ENCODE measurements at regions of chr3 and their contacts with region 1.

Region 1: DNA sequence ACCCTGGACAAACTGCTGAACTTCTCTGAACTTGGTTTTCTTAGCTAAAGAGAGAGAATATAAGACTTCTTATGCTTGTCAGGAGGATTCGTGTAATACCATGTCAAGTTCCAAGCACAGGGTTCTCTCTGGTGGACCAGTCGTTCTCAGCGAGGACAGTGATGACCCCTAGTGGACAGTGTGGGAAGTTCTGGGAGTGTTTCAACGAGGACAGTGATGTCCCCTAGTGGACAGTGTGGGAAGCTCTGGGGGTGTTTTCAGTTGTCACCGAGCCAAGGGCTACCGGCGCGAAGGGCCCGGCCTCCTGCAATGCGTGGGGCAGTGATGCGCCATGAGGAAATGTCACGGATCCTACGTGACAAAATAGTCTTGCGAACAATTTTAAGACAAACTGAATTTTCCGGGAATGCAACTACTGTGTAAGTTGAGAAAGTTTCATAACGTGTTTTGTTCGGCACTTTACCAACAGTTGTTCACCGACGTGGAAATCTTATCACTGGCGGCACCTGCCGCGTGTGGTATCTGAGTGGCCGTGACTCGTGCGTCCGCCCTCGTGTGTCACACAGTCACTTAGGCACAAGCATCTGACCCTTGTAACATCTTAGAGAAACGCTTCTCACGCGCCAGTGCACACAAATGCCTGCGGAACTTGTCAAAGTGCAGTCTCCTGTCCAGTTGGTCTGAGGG is 39.3 kb upstream of the MUC4 start:
- DNase-seq: peak; percentile 76 to 93 (median 88)
- ATAC-seq: peak; percentile 100
- H3K4me3 ChIP-seq: no peak overlapping the region
- H3K4me3 Mint-ChIP-seq: peak overlapping the region; percentile 16
- H3K27ac ChIP-seq: no peak overlapping the region
- H3K27ac Mint-ChIP-seq: no peak overlapping the region
- H3K4me1 ChIP-seq: no peaks in the 10 kb centered on the region
- H3K4me1 Mint-ChIP-seq: peaks cover 7% of the 10 kb centered on the region
- H3K27me3 ChIP-seq: no peaks in the 10 kb centered on the region
- H3K27me3 Mint-ChIP-seq: no peaks in the 10 kb centered on the region
- CTCF ChIP-seq: peak; percentile 100

Region 2: GRCh38 chr3:195558602-195559001 is 292.4 kb before region 1 on chr3:
- CTCF ChIA-PET with region 1: interaction called, 6 read pairs
- POLR2A ChIA-PET with region 1: no interaction called
- intact Hi-C with region 1: loop called in 1 of 2 experiments (anchors 2 kb)
- DNase-seq: peak in 5 of 9 experiments; percentile 29 to 77 (median 34)
- ATAC-seq: peak; percentile 89
- H3K4me3 ChIP-seq: no peak overlapping the region
- H3K4me3 Mint-ChIP-seq: no peak overlapping the region
- H3K27ac ChIP-seq: no peak overlapping the region
- H3K27ac Mint-ChIP-seq: peak overlapping the region; percentile 11
- H3K4me1 ChIP-seq: peaks cover 10% of the 10 kb centered on the region
- H3K4me1 Mint-ChIP-seq: peaks cover 28% of the 10 kb centered on the region
- H3K27me3 ChIP-seq: no peaks in the 10 kb centered on the region
- H3K27me3 Mint-ChIP-seq: no peaks in the 10 kb centered on the region
- CTCF ChIP-seq: peak; percentile 61

Region 3: DNA sequence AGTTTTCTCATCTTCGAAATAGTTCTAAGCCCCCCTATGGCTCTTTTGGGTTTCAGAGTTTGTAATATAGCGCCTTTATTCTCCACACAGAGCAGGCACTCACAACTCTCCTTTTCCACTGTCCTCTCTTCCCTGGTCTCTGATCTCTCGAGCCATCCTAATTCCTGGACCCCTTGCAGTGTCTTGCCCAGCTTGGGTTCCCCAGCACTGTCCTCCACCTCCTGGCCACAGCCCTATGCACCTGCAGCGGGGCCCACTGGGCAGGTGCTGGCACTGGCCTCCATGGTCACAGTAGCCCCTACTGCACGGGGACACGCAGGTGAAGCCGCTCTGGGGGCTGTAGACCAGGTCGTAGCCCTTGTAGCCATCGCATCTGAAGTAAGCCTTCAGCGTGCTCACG is 102.3 kb before region 1 on chr3:
- CTCF ChIA-PET with region 1: interaction called, 4 read pairs
- POLR2A ChIA-PET with region 1: no interaction called
- intact Hi-C with region 1: loop called in 1 of 2 experiments (anchors 5 kb)
- DNase-seq: peak in 1 of 9 experiments; percentile 25
- ATAC-seq: no peak
- H3K4me3 ChIP-seq: no peak overlapping the region
- H3K4me3 Mint-ChIP-seq: no peak overlapping the region
- H3K27ac ChIP-seq: no peak overlapping the region
- H3K27ac Mint-ChIP-seq: no peak overlapping the region
- H3K4me1 ChIP-seq: peaks cover 9% of the 10 kb centered on the region
- H3K4me1 Mint-ChIP-seq: peaks cover 9% of the 10 kb centered on the region
- H3K27me3 ChIP-seq: peaks cover 0 to 4% of the 10 kb centered on the region in 2 experiments
- H3K27me3 Mint-ChIP-seq: peaks cover 6% of the 10 kb centered on the region
- CTCF ChIP-seq: no peak

Region 4: DNA sequence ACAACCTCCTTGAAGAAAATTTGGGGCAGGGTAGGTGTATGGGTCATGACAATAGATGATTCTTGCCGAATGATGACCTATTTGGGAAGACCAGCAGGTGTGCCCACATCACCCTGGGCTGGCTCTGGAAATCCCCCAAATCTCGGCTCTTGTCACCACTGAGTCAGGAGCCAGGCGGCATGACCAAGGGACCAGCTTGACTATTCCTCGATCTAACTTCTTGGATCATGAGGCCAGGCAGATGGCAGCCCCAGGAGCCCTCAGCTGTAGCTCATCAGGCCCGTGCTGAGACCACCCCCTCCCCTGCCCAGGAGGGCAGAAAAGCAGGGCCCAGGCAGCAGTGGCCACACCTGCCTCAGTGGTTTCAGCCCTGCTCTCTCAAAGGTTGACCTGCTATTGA is 30.1 kb before region 1 on chr3:
- CTCF ChIA-PET with region 1: no interaction called
- POLR2A ChIA-PET with region 1: no interaction called
- intact Hi-C with region 1: no loop called
- DNase-seq: no peak
- ATAC-seq: no peak
- H3K4me3 ChIP-seq: no peak overlapping the region
- H3K4me3 Mint-ChIP-seq: no peak overlapping the region
- H3K27ac ChIP-seq: no peak overlapping the region
- H3K27ac Mint-ChIP-seq: no peak overlapping the region
- H3K4me1 ChIP-seq: no peaks in the 10 kb centered on the region
- H3K4me1 Mint-ChIP-seq: no peaks in the 10 kb centered on the region
- H3K27me3 ChIP-seq: no peaks in the 10 kb centered on the region
- H3K27me3 Mint-ChIP-seq: peaks cover 4% of the 10 kb centered on the region
- CTCF ChIP-seq: no peak

Region 5: GRCh38 chr3:195894780-195895607 is 44.0 kb after region 1 on chr3:
- CTCF ChIA-PET with region 1: interaction called, 75 read pairs
- POLR2A ChIA-PET with region 1: interaction called, 4 read pairs
- intact Hi-C with region 1: loop called in 1 of 2 experiments (anchors 2 kb)
- DNase-seq: peak; percentile 35 to 86 (median 74)
- ATAC-seq: peak; percentile 66
- H3K4me3 ChIP-seq: peak overlapping the region; percentile 56 to 76
- H3K4me3 Mint-ChIP-seq: peak overlapping the region; percentile 92
- H3K27ac ChIP-seq: peak overlapping the region; percentile 79 to 80
- H3K27ac Mint-ChIP-seq: peak overlapping the region; percentile 94
- H3K4me1 ChIP-seq: peaks cover 38% of the 10 kb centered on the region
- H3K4me1 Mint-ChIP-seq: peaks cover 44% of the 10 kb centered on the region
- H3K27me3 ChIP-seq: no peaks in the 10 kb centered on the region
- H3K27me3 Mint-ChIP-seq: no peaks in the 10 kb centered on the region
- CTCF ChIP-seq: peak; percentile 97

Region 6: DNA sequence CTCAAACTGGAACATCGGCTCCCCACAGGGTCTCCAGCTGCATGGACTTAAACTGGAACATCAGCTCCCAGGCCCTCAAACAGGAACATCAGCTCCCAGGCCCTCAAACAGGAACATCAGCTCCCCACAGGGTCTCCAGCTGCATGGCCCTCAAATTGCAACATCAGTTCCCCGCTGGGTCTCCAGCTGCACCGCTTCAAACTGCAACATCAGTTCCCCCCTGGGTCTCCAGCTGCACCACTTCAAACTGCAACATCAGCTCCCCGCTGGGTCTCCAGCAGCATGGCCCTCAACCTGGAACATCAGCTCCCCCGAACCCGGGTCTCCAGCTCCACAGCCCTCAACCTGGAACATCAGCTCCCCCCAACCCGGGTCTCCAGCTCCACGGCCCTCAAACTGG is 148.9 kb after region 1 on chr3:
- CTCF ChIA-PET with region 1: no interaction called
- POLR2A ChIA-PET with region 1: no interaction called
- intact Hi-C with region 1: loop called in 1 of 2 experiments (anchors 10 kb)
- DNase-seq: no peak
- ATAC-seq: no peak
- H3K4me3 ChIP-seq: no peak overlapping the region
- H3K4me3 Mint-ChIP-seq: no peak overlapping the region
- H3K27ac ChIP-seq: no peak overlapping the region
- H3K27ac Mint-ChIP-seq: no peak overlapping the region
- H3K4me1 ChIP-seq: no peaks in the 10 kb centered on the region
- H3K4me1 Mint-ChIP-seq: no peaks in the 10 kb centered on the region
- H3K27me3 ChIP-seq: no peaks in the 10 kb centered on the region
- H3K27me3 Mint-ChIP-seq: peaks cover 9% of the 10 kb centered on the region
- CTCF ChIP-seq: no peak

Measured in CD8-positive, alpha-beta T cell (primary cell).